ENCODE measurements at regions of chr11 and their contacts with region 1.

Region 1: GRCh38 chr11:36564376-36565030 is 3.3 kb upstream of the RAG1 start:
- DNase-seq: no peak
- H3K4me3 ChIP-seq: peak overlapping the region; percentile 7; the same call in 1 of the 2 replicates
- H3K27me3 ChIP-seq: peaks cover 10% of the 10 kb centered on the region
- CTCF ChIP-seq: peak; percentile 71

Region 2: GRCh38 chr11:36550385-36551115 is 14.0 kb before region 1 on chr11:
- CTCF ChIA-PET with region 1: interaction called, 15 read pairs
- POLR2A ChIA-PET with region 1: no interaction called
- DNase-seq: no peak
- H3K4me3 ChIP-seq: no peak overlapping the region
- H3K27me3 ChIP-seq: no peaks in the 10 kb centered on the region
- CTCF ChIP-seq: no peak

Region 3: GRCh38 chr11:36586543-36586942 is 22.0 kb after region 1 on chr11:
- CTCF ChIA-PET with region 1: interaction called, 10 read pairs
- POLR2A ChIA-PET with region 1: no interaction called
- DNase-seq: no peak
- H3K4me3 ChIP-seq: no peak overlapping the region
- H3K27me3 ChIP-seq: no peaks in the 10 kb centered on the region
- CTCF ChIP-seq: no peak

Region 4: DNA sequence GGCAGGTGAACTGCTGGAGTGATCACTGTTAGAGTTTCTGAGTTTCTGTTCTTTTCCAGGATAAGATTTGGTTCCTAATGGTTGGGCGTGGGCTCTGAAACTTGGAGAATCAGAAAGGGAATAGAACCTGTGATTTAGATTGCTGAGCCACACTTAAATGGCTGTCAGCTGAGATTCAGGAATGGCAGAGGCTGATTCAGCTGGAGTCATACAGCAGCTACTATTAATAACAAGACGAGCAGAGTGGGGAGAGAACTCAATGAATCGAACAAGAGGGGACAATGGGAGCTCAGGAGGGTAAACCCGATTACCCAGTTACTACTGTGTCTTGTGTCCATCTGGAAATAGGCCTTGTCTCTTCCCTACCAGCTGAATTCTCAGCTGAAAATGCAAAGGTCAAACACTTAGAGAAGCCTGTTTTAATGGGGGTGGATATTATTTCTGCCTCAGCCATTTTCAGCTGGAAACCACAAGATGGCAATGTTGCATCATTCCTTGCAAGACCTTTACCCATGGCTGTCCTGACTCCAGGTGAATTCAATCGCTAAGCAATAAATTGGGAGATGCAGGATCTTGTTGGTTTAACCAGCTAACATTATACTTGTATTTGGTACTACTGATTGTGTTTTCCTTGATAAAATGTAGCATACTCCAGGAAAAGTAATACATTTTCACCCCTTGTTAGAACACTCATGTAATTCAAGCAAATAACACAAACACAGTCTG is 138.0 kb after region 1 on chr11:
- CTCF ChIA-PET with region 1: interaction called, 10 read pairs
- POLR2A ChIA-PET with region 1: no interaction called
- DNase-seq: peak; percentile 5
- H3K4me3 ChIP-seq: no peak overlapping the region
- H3K27me3 ChIP-seq: no peaks in the 10 kb centered on the region; the same call in 1 of the 2 replicates
- CTCF ChIP-seq: peak; percentile 76

Region 5: GRCh38 chr11:36746886-36747710 is 182.6 kb after region 1 on chr11:
- CTCF ChIA-PET with region 1: interaction called, 99 read pairs
- POLR2A ChIA-PET with region 1: no interaction called
- DNase-seq: peak; percentile 37
- H3K4me3 ChIP-seq: no peak overlapping the region
- H3K27me3 ChIP-seq: no peaks in the 10 kb centered on the region
- CTCF ChIP-seq: peak; percentile 99